HepG2 (cell line): ENCODE measurements at regions of chr9 and their contacts with region 1.

Region 1: DNA sequence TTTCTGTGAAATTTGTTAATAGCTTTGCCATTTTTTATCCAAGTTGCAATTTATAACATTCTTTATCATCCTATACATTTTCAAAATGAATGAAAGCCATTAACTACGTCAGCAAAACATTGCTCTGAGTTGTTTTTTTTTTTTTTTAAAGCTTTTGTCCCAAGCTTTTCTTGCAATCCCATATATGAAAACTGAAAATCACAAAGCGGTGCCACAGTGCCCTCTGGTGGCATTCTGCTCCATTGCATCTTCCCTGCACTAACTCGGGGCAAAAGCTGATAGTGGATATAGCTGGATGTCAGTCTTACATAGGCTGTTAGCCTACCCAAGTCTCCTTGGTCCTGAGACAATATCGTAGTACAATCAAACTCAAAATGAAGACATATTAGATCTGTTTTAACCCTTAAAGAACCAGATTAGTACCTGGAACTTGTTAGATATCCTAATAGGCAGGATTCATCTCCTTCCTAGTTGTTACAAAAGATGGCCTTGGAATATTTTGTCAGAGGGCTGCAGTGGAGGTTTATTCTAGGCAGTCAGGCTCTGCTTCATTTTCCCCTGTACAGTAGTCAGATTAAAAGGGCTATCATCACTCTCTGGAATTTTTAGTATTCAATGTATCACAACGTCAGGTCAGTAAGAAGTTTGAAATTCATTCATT is 669.9 kb downstream of the PTPRD start:
- DNase-seq: peak; percentile 42
- ATAC-seq: peak; percentile 84
- H3K4me3 ChIP-seq: no peak overlapping the region
- H3K27ac ChIP-seq: no peak overlapping the region
- H3K4me1 ChIP-seq: no peaks in the 10 kb centered on the region
- H3K27me3 ChIP-seq: no peaks in the 10 kb centered on the region
- CTCF ChIP-seq: peak; percentile 82
- EP300 ChIP-seq: no peak
- POLR2A ChIP-seq: no peak
- RAD21 ChIP-seq: 0 out of 2 replicates have a peak, but pooled peaks have one; percentile 23

Region 2: GRCh38 chr9:9603345-9603744 is 339.5 kb before region 1 on chr9:
- CTCF ChIA-PET with region 1: interaction called, 5 read pairs
- POLR2A ChIA-PET with region 1: no interaction called
- in situ Hi-C with region 1: loop called (anchors 10 kb)
- intact Hi-C with region 1: no loop called
- DNase-seq: no peak
- ATAC-seq: no peak
- H3K4me3 ChIP-seq: no peak overlapping the region
- H3K27ac ChIP-seq: no peak overlapping the region
- H3K4me1 ChIP-seq: no peaks in the 10 kb centered on the region
- H3K27me3 ChIP-seq: no peaks in the 10 kb centered on the region
- CTCF ChIP-seq: no peak
- EP300 ChIP-seq: no peak
- POLR2A ChIP-seq: no peak
- RAD21 ChIP-seq: no peak

Region 3: DNA sequence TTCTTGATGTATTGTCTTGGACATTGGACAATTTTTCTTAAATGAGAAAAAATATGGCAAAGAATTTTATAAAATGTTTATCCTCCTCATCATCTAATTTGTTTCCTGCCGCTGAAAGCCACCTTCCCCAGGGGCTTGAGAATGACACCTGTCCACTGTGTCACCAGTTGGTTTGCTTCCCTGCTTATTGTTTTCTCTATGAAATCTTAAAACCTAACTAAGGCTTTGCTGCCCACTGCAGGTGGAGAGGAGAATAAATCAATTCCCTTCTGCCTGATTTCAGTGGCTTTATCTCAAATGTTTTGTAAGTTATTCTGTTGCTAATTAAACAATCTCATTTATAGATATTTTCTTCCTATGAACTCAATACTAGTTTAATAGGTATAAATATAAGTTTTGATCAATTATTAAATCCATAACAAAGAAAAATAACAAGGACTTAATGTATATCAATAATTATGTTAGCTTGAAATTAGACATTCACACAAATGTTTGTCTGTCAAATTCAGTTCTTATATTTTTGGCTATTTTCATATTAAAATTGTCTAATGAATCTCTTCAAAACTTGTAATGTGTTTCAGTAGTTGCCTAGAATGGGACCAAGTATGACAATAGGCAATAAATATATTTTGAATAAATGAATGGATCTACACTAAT is 152.6 kb before region 1 on chr9:
- CTCF ChIA-PET with region 1: no interaction called
- POLR2A ChIA-PET with region 1: no interaction called
- in situ Hi-C with region 1: no loop called
- intact Hi-C with region 1: loop called (anchors 2 kb)
- DNase-seq: peak; percentile 45
- ATAC-seq: peak; percentile 57
- H3K4me3 ChIP-seq: no peak overlapping the region
- H3K27ac ChIP-seq: no peak overlapping the region
- H3K4me1 ChIP-seq: no peaks in the 10 kb centered on the region
- H3K27me3 ChIP-seq: no peaks in the 10 kb centered on the region
- CTCF ChIP-seq: peak; percentile 66
- EP300 ChIP-seq: no peak
- POLR2A ChIP-seq: no peak
- RAD21 ChIP-seq: no peak